Heart left ventricle (tissue), 16 donors: ENCODE measurements at regions of chrX and their contacts with region 1.

Region 1: GRCh38 chrX:18151649-18152048 is 69.0 kb downstream of the BEND2 start:
- DNase-seq: no peak
- ATAC-seq: peak; percentile 93 to 95 (median 94)
- H3K4me3 ChIP-seq: no peak overlapping the region
- H3K27ac ChIP-seq: peak overlapping the region in 11 of 12 donors; percentile 32 to 86 (median 74)
- H3K4me1 ChIP-seq: peaks cover 0 to 4% (median 0%) of the 10 kb centered on the region in 12 donors
- H3K27me3 ChIP-seq: no peaks in the 10 kb centered on the region
- CTCF ChIP-seq: no peak
- POLR2A ChIP-seq: no peak

Region 2: GRCh38 chrX:17987783-17988182 is 163.9 kb before region 1 on chrX:
- intact Hi-C with region 1: no loop called
- DNase-seq: no peak
- ATAC-seq: no peak
- H3K4me3 ChIP-seq: no peak overlapping the region
- H3K27ac ChIP-seq: no peak overlapping the region
- H3K4me1 ChIP-seq: no peaks in the 10 kb centered on the region
- H3K27me3 ChIP-seq: peaks cover 0 to 8% (median 0%) of the 10 kb centered on the region in 9 donors
- CTCF ChIP-seq: no peak
- POLR2A ChIP-seq: no peak

Region 3: GRCh38 chrX:18098763-18099162 is 52.9 kb before region 1 on chrX:
- intact Hi-C with region 1: loop called in 1 of 10 experiments (anchors 10 kb)
- DNase-seq: peak; percentile 9 to 51 (median 40)
- ATAC-seq: peak; percentile 62 to 70 (median 63)
- H3K4me3 ChIP-seq: no peak overlapping the region
- H3K27ac ChIP-seq: no peak overlapping the region
- H3K4me1 ChIP-seq: no peaks in the 10 kb centered on the region
- H3K27me3 ChIP-seq: peaks cover 0 to 15% (median 0%) of the 10 kb centered on the region in 9 donors
- CTCF ChIP-seq: no peak
- POLR2A ChIP-seq: no peak

Region 4: GRCh38 chrX:18173494-18174180 is 22.0 kb after region 1 on chrX:
- intact Hi-C with region 1: loop called in 1 of 10 experiments (anchors 2 kb)
- DNase-seq: peak in 2 of 5 donors; percentile 51 to 73
- ATAC-seq: peak; percentile 59 to 97 (median 94)
- H3K4me3 ChIP-seq: no peak overlapping the region
- H3K27ac ChIP-seq: peak overlapping the region in 4 of 12 donors; percentile 6 to 52 (median 16)
- H3K4me1 ChIP-seq: no peaks in the 10 kb centered on the region
- H3K27me3 ChIP-seq: peaks cover 0 to 7% (median 0%) of the 10 kb centered on the region in 9 donors
- CTCF ChIP-seq: no peak
- POLR2A ChIP-seq: no peak

Region 5: DNA sequence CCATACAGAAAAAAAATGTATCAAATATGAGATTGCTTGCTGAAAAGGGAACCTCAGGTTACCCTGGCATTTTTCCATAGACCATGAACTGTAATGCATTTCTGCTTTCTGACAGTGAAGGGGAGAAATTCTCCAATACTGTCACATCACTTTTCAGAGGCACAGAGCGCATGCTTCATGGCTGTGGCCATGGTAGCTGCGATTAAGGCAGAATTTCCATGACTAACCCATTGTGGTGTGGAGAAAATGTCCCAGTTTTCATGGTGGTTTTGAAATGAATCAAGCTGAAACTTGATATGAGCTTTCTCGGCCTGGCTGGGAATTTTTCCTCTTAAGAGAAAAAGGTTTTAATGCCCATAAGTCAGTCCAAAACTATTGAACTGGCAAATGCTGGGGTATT is 1403.1 kb after region 1 on chrX:
- intact Hi-C with region 1: no loop called
- DNase-seq: no peak
- ATAC-seq: no peak
- H3K4me3 ChIP-seq: no peak overlapping the region
- H3K27ac ChIP-seq: no peak overlapping the region
- H3K4me1 ChIP-seq: no peaks in the 10 kb centered on the region
- H3K27me3 ChIP-seq: peaks cover 0 to 5% (median 0%) of the 10 kb centered on the region in 9 donors
- CTCF ChIP-seq: no peak
- POLR2A ChIP-seq: no peak